Activated T-helper 1 cell treated with anti-CD3 and anti-CD28 coated beads, Interleukin-12 subunit alpha, Interleukin-12 subunit beta, Interleukin-2, Interleukin-4 antibody, amounts not matched to agents 30 ng/mL and 10 ng/mL and 1 ng/mL, durations not matched to agents 14 hours and 24 hours and 36 hours (primary cell): ENCODE measurements at regions of chr16 and their contacts with region 1.

Region 1: GRCh38 chr16:30657866-30658730 is at the start of gene FBRS:
- DNase-seq: peak; percentile 100
- H3K4me3 Mint-ChIP-seq: peak within 1 kb of the TSS; percentile 94
- H3K27ac Mint-ChIP-seq: peak within 1 kb of the TSS; percentile 99
- H3K4me1 Mint-ChIP-seq: peaks cover 44% of the 10 kb centered on the region
- H3K27me3 Mint-ChIP-seq: no peaks in the 10 kb centered on the region
- total RNA-seq, gene FBRS: 116 and 125 TPM in 2 replicates

Region 2: GRCh38 chr16:29862884-29863668 is 795.0 kb before region 1 on chr16 and contains the start of gene CDIPT:
- intact Hi-C with region 1: loop called (anchors 10 kb)
- DNase-seq: peak; percentile 90
- H3K4me3 Mint-ChIP-seq: peak within 1 kb of the TSS; percentile 97
- H3K27ac Mint-ChIP-seq: peak within 1 kb of the TSS; percentile 100
- H3K4me1 Mint-ChIP-seq: peaks cover 24% of the 10 kb centered on the region
- H3K27me3 Mint-ChIP-seq: no peaks in the 10 kb centered on the region
- total RNA-seq, gene CDIPT: 83.7 and 85.5 TPM in 2 replicates

Region 3: GRCh38 chr16:30370444-30371247 is 287.5 kb before region 1 on chr16 and contains the start of gene TBC1D10B:
- intact Hi-C with region 1: loop called (anchors 1 kb)
- DNase-seq: peak; percentile 99
- H3K4me3 Mint-ChIP-seq: peak within 1 kb of the TSS; percentile 94
- H3K27ac Mint-ChIP-seq: peak within 1 kb of the TSS; percentile 89
- H3K4me1 Mint-ChIP-seq: peaks cover 41% of the 10 kb centered on the region
- H3K27me3 Mint-ChIP-seq: no peaks in the 10 kb centered on the region
- total RNA-seq, gene TBC1D10B: 68.9 and 73.6 TPM in 2 replicates

Region 4: DNA sequence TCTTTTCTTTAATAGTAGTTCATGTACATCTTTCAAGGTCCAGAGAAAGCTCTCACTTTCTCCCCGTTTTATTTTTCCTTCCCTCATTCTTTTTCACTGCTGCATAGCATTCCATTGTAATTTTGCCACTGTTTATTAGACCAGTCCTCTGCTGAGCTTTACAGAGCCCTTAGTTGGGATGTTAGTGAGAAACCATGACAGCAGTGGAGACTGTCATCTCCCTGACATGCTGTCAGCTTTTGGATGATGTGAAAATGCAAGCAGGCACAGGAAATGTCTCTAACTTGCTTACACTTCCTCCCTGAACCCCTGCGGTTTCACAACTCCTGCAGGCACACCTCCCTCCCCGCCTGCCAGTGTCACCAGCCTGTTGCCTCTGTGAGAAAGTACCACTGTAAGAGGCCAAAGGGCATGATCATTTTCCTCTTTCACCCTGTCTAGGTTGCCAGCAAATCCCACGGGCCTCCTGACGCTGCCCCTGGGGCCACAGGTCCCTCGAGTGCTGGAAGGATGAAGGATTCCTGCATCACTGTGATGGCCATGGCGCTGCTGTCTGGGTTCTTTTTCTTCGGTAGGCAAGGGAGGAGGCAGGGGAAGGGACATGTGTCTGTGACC is 185.7 kb before region 1 on chr16 and contains the start of gene ITGAL:
- intact Hi-C with region 1: loop called (anchors 1 kb)
- DNase-seq: peak; percentile 81
- H3K4me3 Mint-ChIP-seq: peak within 1 kb of the TSS; percentile 96
- H3K27ac Mint-ChIP-seq: peak within 1 kb of the TSS; percentile 95
- H3K4me1 Mint-ChIP-seq: peaks cover 60% of the 10 kb centered on the region
- H3K27me3 Mint-ChIP-seq: no peaks in the 10 kb centered on the region
- total RNA-seq, gene ITGAL: 259 and 287 TPM in 2 replicates

Region 5: GRCh38 chr16:30557957-30558788 is 99.9 kb before region 1 on chr16 and contains the start of gene ZNF764:
- intact Hi-C with region 1: loop called (anchors 1 kb)
- DNase-seq: peak; percentile 97
- H3K4me3 Mint-ChIP-seq: peak within 1 kb of the TSS; percentile 90
- H3K27ac Mint-ChIP-seq: peak within 1 kb of the TSS; percentile 92
- H3K4me1 Mint-ChIP-seq: peaks cover 42% of the 10 kb centered on the region
- H3K27me3 Mint-ChIP-seq: no peaks in the 10 kb centered on the region
- total RNA-seq, gene ZNF764: 17.9 and 21.2 TPM in 2 replicates

Region 6: DNA sequence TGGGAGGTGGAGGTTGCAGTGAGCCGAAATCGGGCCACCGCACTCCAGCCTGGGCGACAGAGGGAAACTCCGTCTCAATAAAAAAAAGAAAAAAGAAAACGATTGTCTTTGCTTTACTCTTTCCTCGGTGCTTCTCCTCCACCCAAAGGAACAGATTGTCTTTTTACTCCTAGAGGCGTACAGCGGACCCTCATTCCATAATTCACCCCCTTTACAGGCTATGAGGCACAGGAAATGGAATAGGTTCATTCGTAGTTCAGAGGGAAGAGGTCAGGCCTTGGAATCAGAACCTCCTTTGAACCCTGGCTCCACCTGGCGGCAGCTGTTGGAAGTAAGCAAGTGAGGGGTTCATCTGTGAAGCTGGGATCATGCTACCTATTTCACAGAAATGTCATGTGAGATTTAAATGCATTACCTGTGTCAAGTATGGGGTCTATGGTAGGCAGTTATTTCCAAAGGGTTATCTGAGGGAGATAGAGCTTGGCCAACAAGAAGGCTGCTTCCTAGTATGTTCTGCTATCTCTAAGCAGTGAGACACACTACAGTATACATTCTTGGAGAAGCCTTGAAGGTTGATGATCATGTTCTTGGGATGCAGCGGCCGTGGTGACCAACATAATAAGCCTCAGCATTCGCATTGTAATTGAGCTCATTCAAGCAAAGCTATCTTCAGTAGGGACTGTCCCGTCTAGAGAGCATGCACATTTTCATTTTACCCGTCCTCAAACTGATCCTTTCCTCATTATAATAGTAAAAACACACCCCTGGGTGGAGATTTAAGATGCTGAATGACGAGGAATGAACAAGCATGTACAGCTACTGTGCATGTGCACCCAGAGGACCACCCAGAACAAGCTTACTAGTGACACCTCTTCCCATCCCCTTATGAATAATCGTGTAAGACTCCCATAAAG is 29.2 kb before region 1 on chr16:
- intact Hi-C with region 1: loop called (anchors 1 kb)
- DNase-seq: peak; percentile 77
- H3K4me3 Mint-ChIP-seq: peak overlapping the region; percentile 52
- H3K27ac Mint-ChIP-seq: peak overlapping the region; percentile 71
- H3K4me1 Mint-ChIP-seq: peaks cover 10% of the 10 kb centered on the region
- H3K27me3 Mint-ChIP-seq: no peaks in the 10 kb centered on the region

Region 7: DNA sequence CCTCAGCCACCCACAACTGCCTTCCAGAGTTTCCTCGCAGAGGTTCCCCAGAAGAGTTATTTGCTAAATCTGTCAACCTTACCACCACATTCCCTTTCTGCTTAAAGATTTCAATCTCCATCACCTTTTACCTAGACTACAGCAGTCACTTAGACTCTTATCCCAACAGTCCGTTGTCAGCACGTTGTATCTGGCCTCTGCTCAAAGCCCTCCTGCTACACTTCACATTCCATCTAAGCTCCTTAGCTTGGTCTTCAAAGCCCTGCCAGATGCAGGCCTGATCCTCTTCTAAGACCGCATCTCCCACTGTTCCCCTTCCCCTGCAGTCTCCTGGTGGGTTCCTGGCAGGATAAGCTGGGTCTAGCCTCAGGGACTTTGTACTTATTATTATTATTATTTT is 30.6 kb after region 1 on chr16:
- intact Hi-C with region 1: no loop called
- DNase-seq: no peak
- H3K4me3 Mint-ChIP-seq: no peak overlapping the region
- H3K27ac Mint-ChIP-seq: no peak overlapping the region
- H3K4me1 Mint-ChIP-seq: peaks cover 9% of the 10 kb centered on the region
- H3K27me3 Mint-ChIP-seq: no peaks in the 10 kb centered on the region

Region 8: GRCh38 chr16:30957456-30958174 is 299.5 kb after region 1 on chr16 and contains the start of gene SETD1A:
- intact Hi-C with region 1: loop called (anchors 1 kb)
- DNase-seq: peak; percentile 93
- H3K4me3 Mint-ChIP-seq: peak within 1 kb of the TSS; percentile 96
- H3K27ac Mint-ChIP-seq: peak within 1 kb of the TSS; percentile 97
- H3K4me1 Mint-ChIP-seq: peaks cover 28% of the 10 kb centered on the region
- H3K27me3 Mint-ChIP-seq: no peaks in the 10 kb centered on the region
- total RNA-seq, gene SETD1A: 34.0 and 38.8 TPM in 2 replicates

Region 9: DNA sequence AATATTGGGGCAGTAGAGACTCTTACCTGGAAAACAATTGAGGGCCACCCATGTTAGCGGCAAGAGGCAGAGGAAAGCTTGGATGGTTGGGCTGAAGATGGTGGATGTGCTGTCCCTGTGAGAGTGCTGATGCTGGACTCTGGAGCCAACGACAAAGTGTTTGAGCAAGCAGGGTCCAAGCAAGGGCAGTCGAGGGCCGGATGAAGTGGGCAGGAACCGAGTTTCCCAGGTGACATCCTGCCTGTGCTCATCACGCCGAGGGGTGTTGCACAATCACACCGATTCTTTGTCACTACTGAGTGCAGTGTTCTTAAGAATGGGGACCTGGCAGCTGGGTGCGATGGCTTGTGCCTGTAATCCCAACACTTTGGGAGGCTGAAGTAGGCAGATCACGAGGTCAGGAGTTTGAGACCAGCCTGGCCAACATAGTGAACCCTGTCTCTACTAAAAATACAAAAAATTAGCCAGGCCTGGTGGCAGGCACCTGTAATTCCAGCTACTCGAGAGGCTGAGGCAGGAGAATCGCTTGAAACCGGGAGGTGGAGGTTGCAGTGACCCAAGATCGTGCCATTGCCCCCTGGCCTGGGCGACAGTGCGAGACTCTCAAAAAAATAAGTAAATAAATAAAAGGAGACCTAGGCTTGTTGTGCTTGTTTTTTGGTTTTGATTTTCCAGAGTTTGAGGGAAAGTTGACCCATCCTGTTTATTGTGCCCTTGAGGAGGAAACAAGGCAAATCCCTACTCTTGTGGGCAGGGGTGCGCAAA is 538.4 kb after region 1 on chr16:
- intact Hi-C with region 1: no loop called
- DNase-seq: no peak
- H3K4me3 Mint-ChIP-seq: no peak overlapping the region
- H3K27ac Mint-ChIP-seq: peak overlapping the region; percentile 65
- H3K4me1 Mint-ChIP-seq: peaks cover 47% of the 10 kb centered on the region
- H3K27me3 Mint-ChIP-seq: no peaks in the 10 kb centered on the region